ENCODE measurements at regions of chr6 and their contacts with region 1.

Region 1: DNA sequence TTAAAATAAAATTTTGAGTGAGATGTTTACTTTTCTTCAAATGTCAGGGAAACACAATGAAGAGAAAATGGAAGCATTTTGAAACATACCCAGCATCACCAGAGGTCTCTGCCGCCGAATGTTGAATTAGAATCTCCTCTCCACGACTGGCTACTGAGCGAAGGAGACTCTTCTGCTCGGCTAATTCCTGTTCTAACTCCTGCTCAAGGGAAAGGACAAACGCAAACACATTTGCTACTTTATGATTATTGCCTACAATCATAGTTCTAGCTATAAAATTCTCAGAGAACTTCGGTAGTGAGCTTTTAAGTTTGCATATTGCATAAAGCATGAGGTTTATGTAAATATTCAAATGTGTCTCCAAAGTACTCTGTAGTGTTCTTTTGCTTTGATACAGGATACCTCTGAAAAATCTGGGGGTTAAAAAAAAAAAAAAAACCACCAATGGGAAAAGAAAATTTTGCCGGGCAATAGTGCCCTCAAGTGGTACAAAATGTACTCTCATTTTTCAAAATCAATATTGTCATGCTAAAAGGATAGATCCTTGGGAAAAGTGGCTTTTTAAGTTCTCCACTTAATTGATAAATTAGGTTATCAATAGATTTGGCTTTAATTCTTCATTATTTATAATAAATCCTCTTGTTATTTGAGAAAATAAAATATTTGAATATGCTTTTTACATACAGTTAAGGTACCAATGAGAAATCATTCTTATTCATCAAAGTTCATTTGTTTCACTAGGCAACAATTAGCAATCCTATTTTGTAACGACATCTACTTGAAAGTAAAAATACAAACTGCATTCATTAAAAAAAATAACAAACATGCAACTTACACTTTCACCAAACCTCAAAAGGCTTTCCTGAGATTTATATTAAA is 369.0 kb downstream of the SYNE1 start:
- DNase-seq: no peak
- H3K4me3 Mint-ChIP-seq: no peak overlapping the region
- H3K27ac Mint-ChIP-seq: no peak overlapping the region
- H3K4me1 Mint-ChIP-seq: peaks cover 28% of the 10 kb centered on the region
- H3K27me3 Mint-ChIP-seq: no peaks in the 10 kb centered on the region

Region 2: DNA sequence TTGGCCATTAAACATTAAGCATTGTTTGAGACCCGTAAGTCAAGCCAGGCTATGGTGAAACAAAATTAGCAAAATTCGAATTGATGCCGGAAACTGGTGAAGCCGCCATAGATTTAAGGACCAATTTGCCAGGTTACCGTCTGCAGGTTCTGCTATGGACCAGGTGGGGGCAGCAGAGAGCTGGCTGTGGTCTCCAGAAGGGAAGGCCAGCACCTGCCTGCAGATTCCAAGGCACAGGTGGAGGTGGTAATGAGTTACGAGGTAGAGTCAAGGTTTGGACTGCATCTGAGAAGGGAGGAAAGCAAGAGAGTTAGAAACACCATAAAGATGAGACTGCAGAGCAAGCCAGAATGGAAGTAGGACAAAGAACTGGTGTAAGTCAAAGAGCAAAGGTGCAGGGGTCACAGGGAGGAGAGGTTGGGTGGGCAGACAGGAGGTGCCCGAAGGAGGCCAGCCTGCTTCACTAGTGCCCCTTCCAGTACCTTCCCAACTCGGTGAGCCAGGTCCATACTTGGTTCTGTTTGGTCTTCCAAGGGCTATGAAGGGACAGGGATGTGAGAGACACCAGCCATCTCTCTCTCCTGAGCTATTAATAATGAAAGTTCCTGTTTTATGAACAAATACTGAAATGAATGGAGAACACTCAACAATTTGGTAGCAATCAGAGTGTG is 592.3 kb before region 1 on chr6:
- CTCF ChIA-PET with region 1: interaction called, 12 read pairs
- POLR2A ChIA-PET with region 1: no interaction called
- DNase-seq: peak; percentile 63
- H3K4me3 Mint-ChIP-seq: no peak overlapping the region
- H3K27ac Mint-ChIP-seq: no peak overlapping the region
- H3K4me1 Mint-ChIP-seq: peaks cover 12% of the 10 kb centered on the region
- H3K27me3 Mint-ChIP-seq: no peaks in the 10 kb centered on the region

Region 3: GRCh38 chr6:152124429-152125074 is 143.7 kb before region 1 on chr6:
- CTCF ChIA-PET with region 1: interaction called, 10 read pairs
- POLR2A ChIA-PET with region 1: no interaction called
- DNase-seq: no peak
- H3K4me3 Mint-ChIP-seq: no peak overlapping the region
- H3K27ac Mint-ChIP-seq: no peak overlapping the region
- H3K4me1 Mint-ChIP-seq: no peaks in the 10 kb centered on the region
- H3K27me3 Mint-ChIP-seq: no peaks in the 10 kb centered on the region

Region 4: DNA sequence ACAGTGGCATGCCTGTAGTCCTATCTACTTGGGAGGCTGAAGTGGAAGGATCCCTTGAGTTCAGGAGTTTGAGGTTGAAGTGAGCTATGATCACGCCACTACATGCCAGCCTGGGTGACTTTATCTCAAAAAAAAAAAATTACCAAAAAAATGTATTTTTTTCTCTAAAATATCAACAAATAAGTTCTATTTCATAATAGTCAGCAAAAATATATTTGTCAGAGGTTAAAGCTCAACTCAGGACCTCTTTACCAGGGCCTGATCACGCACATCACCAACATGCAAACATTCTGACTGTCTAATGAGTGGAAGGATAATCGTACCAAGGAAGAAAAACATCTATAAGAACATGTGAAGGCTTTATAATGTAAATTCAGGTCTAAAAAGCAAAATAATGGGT is 18.1 kb before region 1 on chr6:
- CTCF ChIA-PET with region 1: no interaction called
- POLR2A ChIA-PET with region 1: no interaction called
- DNase-seq: no peak
- H3K4me3 Mint-ChIP-seq: no peak overlapping the region
- H3K27ac Mint-ChIP-seq: no peak overlapping the region
- H3K4me1 Mint-ChIP-seq: no peaks in the 10 kb centered on the region
- H3K27me3 Mint-ChIP-seq: no peaks in the 10 kb centered on the region

Region 5: GRCh38 chr6:152338335-152339125 is 70.3 kb after region 1 on chr6:
- CTCF ChIA-PET with region 1: no interaction called
- POLR2A ChIA-PET with region 1: no interaction called
- DNase-seq: peak; percentile 61
- H3K4me3 Mint-ChIP-seq: no peak overlapping the region
- H3K27ac Mint-ChIP-seq: no peak overlapping the region
- H3K4me1 Mint-ChIP-seq: peaks cover 10% of the 10 kb centered on the region
- H3K27me3 Mint-ChIP-seq: peaks cover 2% of the 10 kb centered on the region